AG04450 (cell line): ENCODE measurements at regions of chr17 and their contacts with region 1.

Region 1: DNA sequence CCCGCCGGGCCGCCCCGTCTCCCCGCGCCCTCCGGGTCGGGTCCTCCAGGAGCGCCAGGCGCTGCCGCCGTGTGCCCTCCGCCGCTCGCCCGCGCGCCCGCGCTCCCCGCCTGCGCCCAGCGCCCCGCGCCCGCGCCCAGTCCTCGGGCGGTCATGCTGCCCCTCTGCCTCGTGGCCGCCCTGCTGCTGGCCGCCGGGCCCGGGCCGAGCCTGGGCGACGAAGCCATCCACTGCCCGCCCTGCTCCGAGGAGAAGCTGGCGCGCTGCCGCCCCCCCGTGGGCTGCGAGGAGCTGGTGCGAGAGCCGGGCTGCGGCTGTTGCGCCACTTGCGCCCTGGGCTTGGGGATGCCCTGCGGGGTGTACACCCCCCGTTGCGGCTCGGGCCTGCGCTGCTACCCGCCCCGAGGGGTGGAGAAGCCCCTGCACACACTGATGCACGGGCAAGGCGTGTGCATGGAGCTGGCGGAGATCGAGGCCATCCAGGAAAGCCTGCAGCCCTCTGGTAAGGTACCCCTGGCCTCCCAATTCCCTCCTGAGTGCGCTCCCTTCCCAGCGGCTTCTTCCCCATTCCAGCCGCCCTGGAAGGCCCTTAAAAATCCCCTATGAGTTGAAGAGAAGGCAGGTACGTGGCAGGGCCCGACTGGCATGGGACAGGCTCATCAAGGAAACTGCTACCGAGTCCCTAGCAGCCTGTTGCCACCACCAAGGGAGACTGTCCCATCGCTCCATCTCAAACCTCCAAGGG is 505 bp downstream of the IGFBP4 start:
- DNase-seq: no peak
- H3K4me3 ChIP-seq: peak overlapping the region; percentile 98
- H3K27ac ChIP-seq: peak overlapping the region; percentile 39
- H3K27me3 ChIP-seq: no peaks in the 10 kb centered on the region
- CTCF ChIP-seq: peak; percentile 48

Region 2: GRCh38 chr17:40457964-40458791 is 14.4 kb after region 1 on chr17:
- CTCF ChIA-PET with region 1: interaction called, 4 read pairs
- POLR2A ChIA-PET with region 1: interaction called, 12 read pairs
- DNase-seq: peak; percentile 67
- H3K4me3 ChIP-seq: no peak overlapping the region
- H3K27ac ChIP-seq: peak overlapping the region; percentile 71
- H3K27me3 ChIP-seq: no peaks in the 10 kb centered on the region
- CTCF ChIP-seq: no peak

Region 3: GRCh38 chr17:40464392-40464855 is 20.7 kb after region 1 on chr17:
- CTCF ChIA-PET with region 1: interaction called, 4 read pairs
- POLR2A ChIA-PET with region 1: interaction called, 17 read pairs
- DNase-seq: no peak
- H3K4me3 ChIP-seq: no peak overlapping the region
- H3K27ac ChIP-seq: no peak overlapping the region
- H3K27me3 ChIP-seq: no peaks in the 10 kb centered on the region
- CTCF ChIP-seq: no peak

Region 4: DNA sequence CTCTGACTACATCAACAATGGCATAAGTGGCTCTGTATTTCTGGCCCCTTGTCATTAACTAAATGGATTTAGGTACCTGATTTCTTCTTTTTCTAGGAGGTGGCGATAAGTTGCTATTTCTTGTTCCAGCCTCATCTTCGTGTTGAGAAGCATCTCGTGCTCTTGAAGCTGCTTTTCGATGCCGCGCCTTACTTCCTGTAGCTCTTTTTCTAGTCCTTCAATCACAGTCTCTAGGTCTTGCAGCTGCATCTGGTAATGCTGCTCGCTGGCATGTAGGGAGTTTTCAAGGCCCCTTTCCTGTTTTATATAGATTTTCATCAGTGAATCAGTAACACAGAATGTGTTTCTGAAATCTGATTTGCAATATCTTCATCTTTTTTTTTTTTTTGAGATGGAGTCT is 216.2 kb after region 1 on chr17:
- CTCF ChIA-PET with region 1: no interaction called
- POLR2A ChIA-PET with region 1: no interaction called
- DNase-seq: no peak
- H3K4me3 ChIP-seq: no peak overlapping the region
- H3K27ac ChIP-seq: no peak overlapping the region
- H3K27me3 ChIP-seq: peaks cover 20% of the 10 kb centered on the region
- CTCF ChIP-seq: no peak

Region 5: DNA sequence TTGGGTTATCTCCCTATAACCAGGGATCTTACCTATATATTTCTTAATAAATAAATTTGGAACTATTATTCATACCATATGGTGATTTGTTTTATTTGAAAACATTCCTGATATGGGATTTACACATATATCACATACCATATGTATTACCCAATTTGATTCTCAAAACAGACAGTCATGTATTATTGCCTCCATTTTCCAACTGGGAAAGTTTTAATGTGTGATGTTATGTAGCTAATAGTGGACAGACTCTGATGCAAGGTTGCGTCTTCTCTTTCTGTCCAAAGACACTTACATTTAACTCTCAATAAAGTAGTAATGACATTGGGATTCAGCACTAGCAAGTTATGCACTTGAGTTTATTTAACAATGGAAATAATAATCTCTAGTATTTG is 812.5 kb after region 1 on chr17:
- CTCF ChIA-PET with region 1: interaction called, 10 read pairs
- POLR2A ChIA-PET with region 1: no interaction called
- DNase-seq: no peak
- H3K4me3 ChIP-seq: no peak overlapping the region
- H3K27ac ChIP-seq: no peak overlapping the region
- H3K27me3 ChIP-seq: peaks cover 7% of the 10 kb centered on the region
- CTCF ChIP-seq: no peak